ENCODE measurements at regions of chr4 and their contacts with region 1.

Region 1: GRCh38 chr4:177555007-177555574 is 112.9 kb upstream of the AGA start:
- DNase-seq: peak; percentile 61
- H3K4me3 Mint-ChIP-seq: no peak overlapping the region
- H3K27ac Mint-ChIP-seq: no peak overlapping the region
- H3K4me1 Mint-ChIP-seq: no peaks in the 10 kb centered on the region
- H3K27me3 Mint-ChIP-seq: no peaks in the 10 kb centered on the region
- CTCF ChIP-seq: peak; percentile 77

Region 2: GRCh38 chr4:178599521-178599920 is 1044.4 kb after region 1 on chr4:
- CTCF ChIA-PET with region 1: interaction called, 4 read pairs
- POLR2A ChIA-PET with region 1: no interaction called
- intact Hi-C with region 1: loop called (anchors 10 kb)
- DNase-seq: peak; percentile 28
- H3K4me3 Mint-ChIP-seq: no peak overlapping the region
- H3K27ac Mint-ChIP-seq: no peak overlapping the region
- H3K4me1 Mint-ChIP-seq: no peaks in the 10 kb centered on the region
- H3K27me3 Mint-ChIP-seq: no peaks in the 10 kb centered on the region
- CTCF ChIP-seq: peak; percentile 42